Activated T-helper 1 cell treated with anti-CD3 and anti-CD28 coated beads, Interleukin-12 subunit alpha, Interleukin-12 subunit beta, Interleukin-2, Interleukin-4 antibody, amounts not matched to agents 30 ng/mL and 10 ng/mL and 1 ng/mL, durations not matched to agents 14 hours and 24 hours and 36 hours (primary cell): ENCODE measurements at regions of chr9 and their contacts with region 1.

Region 1: GRCh38 chr9:128881901-128882681 is at the starts of genes KYAT1 and LRRC8A:
- DNase-seq: peak; percentile 99
- H3K4me3 Mint-ChIP-seq: peak within 1 kb of the TSS; percentile 96
- H3K27ac Mint-ChIP-seq: peak within 1 kb of the TSS; percentile 97
- H3K4me1 Mint-ChIP-seq: peaks cover 53% of the 10 kb centered on the region
- H3K27me3 Mint-ChIP-seq: peaks cover 2% of the 10 kb centered on the region
- total RNA-seq, gene KYAT1: 10.6 and 12.2 TPM in 2 replicates
- total RNA-seq, gene LRRC8A: 30.1 and 32.9 TPM in 2 replicates

Region 2: GRCh38 chr9:128370826-128371621 is 511.1 kb before region 1 on chr9 and contains the start of gene URM1:
- intact Hi-C with region 1: loop called (anchors 1 kb)
- DNase-seq: peak; percentile 96
- H3K4me3 Mint-ChIP-seq: peak within 1 kb of the TSS; percentile 96
- H3K27ac Mint-ChIP-seq: peak within 1 kb of the TSS; percentile 94
- H3K4me1 Mint-ChIP-seq: peaks cover 33% of the 10 kb centered on the region
- H3K27me3 Mint-ChIP-seq: no peaks in the 10 kb centered on the region
- total RNA-seq, gene URM1: 81.6 and 82.6 TPM in 2 replicates

Region 3: GRCh38 chr9:128710067-128710466 is 172.0 kb before region 1 on chr9:
- intact Hi-C with region 1: no loop called
- DNase-seq: no peak
- H3K4me3 Mint-ChIP-seq: no peak overlapping the region
- H3K27ac Mint-ChIP-seq: no peak overlapping the region
- H3K4me1 Mint-ChIP-seq: no peaks in the 10 kb centered on the region
- H3K27me3 Mint-ChIP-seq: no peaks in the 10 kb centered on the region

Region 4: DNA sequence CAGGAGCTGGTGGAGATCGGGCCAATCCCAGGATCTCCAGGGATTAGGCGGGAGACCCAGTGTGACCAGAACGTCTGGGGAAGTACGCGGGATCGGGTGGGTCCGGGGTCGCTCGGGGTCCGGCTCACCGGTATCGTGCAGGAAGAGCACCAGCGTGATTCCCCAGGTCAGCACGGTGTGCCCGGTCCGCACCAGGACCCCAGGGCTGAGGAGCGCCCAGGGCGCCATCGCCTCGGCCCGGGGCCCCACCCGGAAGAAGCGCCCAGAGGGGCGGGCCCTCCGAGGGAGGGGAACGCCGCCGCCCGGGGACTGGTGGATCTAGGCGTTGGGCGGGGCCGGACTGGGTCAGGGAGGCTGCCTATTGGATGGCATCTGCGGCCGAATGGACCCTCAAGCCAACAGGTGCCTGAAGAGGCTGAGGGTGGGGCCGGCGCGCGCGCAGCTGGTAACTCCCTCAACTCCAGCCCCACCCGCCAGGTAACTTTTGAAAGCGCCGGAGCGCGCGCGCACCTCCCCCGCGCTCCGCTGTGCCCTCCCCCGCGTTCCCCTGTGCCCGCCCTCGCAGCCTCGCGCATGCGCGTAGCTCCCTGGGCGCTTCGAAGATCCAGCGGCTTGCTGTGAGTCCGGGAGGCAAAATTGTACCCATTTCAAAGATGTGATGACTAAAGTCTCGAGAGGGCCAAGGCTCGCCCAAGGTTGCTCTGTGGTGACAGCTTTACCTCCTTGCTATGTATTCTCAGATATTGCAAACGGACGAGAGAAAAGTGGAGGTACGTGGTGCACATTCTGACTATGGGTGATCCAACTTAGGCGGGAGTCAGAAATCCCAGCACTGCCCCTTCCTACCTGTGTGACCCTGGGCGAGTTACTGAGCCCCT is 158.0 kb before region 1 on chr9 and contains the start of gene ZDHHC12:
- intact Hi-C with region 1: loop called (anchors 1 kb)
- DNase-seq: peak; percentile 99
- H3K4me3 Mint-ChIP-seq: peak within 1 kb of the TSS; percentile 92
- H3K27ac Mint-ChIP-seq: peak within 1 kb of the TSS; percentile 93
- H3K4me1 Mint-ChIP-seq: peaks cover 42% of the 10 kb centered on the region
- H3K27me3 Mint-ChIP-seq: no peaks in the 10 kb centered on the region
- total RNA-seq, gene ZDHHC12: 51.7 and 54.4 TPM in 2 replicates

Region 5: GRCh38 chr9:128818099-128818838 is 63.8 kb before region 1 on chr9 and contains the start of gene ENDOG:
- intact Hi-C with region 1: loop called (anchors 1 kb)
- DNase-seq: peak; percentile 99
- H3K4me3 Mint-ChIP-seq: peak within 1 kb of the TSS; percentile 88
- H3K27ac Mint-ChIP-seq: peak within 1 kb of the TSS; percentile 79
- H3K4me1 Mint-ChIP-seq: peaks cover 14% of the 10 kb centered on the region
- H3K27me3 Mint-ChIP-seq: no peaks in the 10 kb centered on the region
- total RNA-seq, gene ENDOG: 22.1 and 26.2 TPM in 2 replicates

Region 6: GRCh38 chr9:128892317-128892921 is 10.3 kb after region 1 on chr9:
- intact Hi-C with region 1: no loop called
- DNase-seq: no peak
- H3K4me3 Mint-ChIP-seq: no peak overlapping the region
- H3K27ac Mint-ChIP-seq: no peak overlapping the region
- H3K4me1 Mint-ChIP-seq: peaks cover 56% of the 10 kb centered on the region
- H3K27me3 Mint-ChIP-seq: no peaks in the 10 kb centered on the region

Region 7: DNA sequence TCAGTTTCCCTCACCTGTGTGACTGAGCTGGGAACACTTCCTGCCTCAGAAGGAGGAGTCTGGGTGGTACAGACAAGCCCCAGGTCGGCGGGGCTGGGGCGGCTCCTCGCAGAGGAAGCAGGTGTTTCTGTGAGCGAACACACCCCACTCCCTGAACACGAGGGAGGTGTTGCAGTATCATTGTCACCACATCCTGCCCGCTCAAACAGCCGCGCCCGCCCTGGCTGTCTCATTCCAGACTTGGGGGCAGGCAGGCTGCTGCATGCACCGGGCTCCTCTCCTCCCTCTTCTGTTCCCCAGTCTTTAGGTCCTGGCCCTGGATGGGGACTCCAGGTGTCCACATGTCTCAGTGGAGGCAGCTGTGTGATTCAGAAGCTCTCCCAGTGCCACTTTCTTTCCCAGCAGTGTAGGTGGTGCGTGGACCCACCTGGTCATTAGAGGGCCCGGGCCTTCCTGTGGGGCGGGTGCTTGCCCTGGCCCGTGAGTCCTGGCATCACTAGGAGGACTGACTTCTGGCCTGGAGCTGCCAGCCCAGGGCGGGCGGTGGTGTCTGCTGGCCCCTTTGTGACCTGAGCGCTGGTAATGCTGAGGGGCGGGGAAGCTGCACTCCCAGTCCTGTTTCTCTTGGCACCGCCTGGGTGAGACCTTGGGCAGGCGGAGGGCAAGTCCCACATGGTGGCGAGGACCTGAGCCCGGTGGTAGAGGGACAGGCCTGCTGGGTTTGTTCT is 20.4 kb after region 1 on chr9:
- intact Hi-C with region 1: loop called (anchors 1 kb)
- DNase-seq: peak; percentile 83
- H3K4me3 Mint-ChIP-seq: peak overlapping the region; percentile 66
- H3K27ac Mint-ChIP-seq: peak overlapping the region; percentile 96
- H3K4me1 Mint-ChIP-seq: peaks cover 65% of the 10 kb centered on the region
- H3K27me3 Mint-ChIP-seq: no peaks in the 10 kb centered on the region

Region 8: DNA sequence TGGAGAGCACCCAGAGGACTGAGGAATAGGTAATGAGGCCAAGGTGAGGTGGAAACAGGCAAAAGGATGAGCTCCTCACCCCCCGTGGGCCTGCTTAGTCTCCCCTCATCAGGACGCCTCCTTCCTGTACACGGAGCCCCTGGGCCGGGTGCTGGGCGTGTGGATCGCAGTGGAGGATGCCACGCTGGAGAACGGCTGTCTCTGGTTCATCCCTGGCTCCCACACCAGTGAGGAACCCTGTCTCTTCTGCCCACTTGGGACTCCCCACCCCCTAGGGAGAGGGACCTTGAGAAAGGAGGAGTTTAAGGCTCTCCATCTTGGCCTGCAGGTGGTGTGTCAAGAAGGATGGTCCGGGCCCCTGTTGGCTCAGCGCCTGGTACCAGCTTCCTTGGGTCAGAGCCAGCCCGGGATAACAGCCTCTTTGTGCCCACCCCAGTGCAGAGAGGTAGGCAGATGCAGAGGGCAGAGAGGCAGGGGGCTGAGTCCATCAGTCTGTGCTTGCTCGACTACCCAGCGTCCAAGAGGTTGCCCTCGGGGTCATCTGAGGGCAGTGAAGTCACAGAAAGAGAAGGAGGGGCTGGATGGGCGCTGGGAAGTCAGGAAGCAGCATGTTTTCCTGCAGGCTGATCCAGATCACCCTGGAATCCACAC is 58.3 kb after region 1 on chr9:
- intact Hi-C with region 1: no loop called
- DNase-seq: no peak
- H3K4me3 Mint-ChIP-seq: no peak overlapping the region
- H3K27ac Mint-ChIP-seq: no peak overlapping the region
- H3K4me1 Mint-ChIP-seq: no peaks in the 10 kb centered on the region
- H3K27me3 Mint-ChIP-seq: no peaks in the 10 kb centered on the region

Region 9: GRCh38 chr9:129028192-129028957 is 146.3 kb after region 1 on chr9 and contains the start of gene SH3GLB2:
- intact Hi-C with region 1: loop called (anchors 2 kb)
- DNase-seq: peak; percentile 85
- H3K4me3 Mint-ChIP-seq: peak within 1 kb of the TSS; percentile 91
- H3K27ac Mint-ChIP-seq: peak within 1 kb of the TSS; percentile 80
- H3K4me1 Mint-ChIP-seq: peaks cover 24% of the 10 kb centered on the region
- H3K27me3 Mint-ChIP-seq: no peaks in the 10 kb centered on the region
- total RNA-seq, gene SH3GLB2: 71.1 and 74.8 TPM in 2 replicates